ENCODE measurements at regions of chr3 and their contacts with region 1.

Region 1: DNA sequence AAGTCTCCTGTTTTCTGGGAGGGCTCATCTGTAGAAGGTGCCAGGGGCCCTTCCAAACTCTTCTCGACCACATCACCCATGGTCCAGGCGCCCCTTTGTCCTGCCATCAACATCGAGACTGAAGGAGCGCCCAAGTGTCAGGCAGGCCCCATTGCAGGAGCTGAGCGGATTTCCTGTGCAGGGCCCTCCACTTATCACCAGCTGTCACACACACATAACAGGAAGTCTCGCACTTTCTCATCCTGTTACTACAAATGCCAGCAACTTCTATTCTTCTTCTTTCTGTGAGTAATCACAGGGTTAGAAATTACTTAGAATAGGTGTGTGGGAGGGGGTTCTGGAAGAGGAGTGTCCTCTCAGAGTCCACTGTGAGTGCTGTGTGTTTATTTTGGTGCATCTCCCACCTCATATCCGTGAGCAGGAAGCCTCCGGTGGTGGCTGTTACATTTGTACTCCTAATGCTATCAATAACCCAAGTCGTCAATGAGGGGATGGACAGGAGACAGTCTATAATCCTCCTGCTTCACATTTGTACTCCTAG is at the start of gene KLHL6:
- DNase-seq: peak; percentile 93 to 98 (median 95)
- H3K4me3 ChIP-seq: peak within 1 kb of the TSS; percentile 33 to 88 (median 82)
- H3K27ac ChIP-seq: peak within 1 kb of the TSS; percentile 87 to 91
- H3K4me1 ChIP-seq: peaks cover 17 to 71% (median 39%) of the 10 kb centered on the region in 4 experiments
- H3K27me3 ChIP-seq: no peaks in the 10 kb centered on the region

Region 2: DNA sequence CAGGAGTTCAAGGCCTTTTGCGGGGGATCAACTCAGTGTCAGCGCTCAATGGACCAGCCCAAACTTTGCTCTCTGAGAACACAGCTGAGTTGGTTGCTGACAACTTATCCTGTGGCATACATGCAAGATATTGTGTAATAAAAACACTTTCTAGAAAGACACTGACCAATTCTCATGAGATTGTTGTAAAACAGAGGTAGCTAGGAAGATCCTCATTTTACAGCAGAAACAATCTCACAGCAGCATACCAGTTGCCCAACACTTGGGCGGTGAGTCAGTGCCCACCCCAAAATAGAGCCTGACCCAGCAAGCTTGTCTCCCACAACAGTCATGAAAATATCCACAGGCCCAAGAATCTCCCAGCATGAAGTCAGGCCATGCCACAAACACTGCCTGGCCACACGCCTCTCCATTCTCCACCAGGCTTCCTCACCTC is 18.3 kb before region 1 on chr3:
- CTCF ChIA-PET with region 1: interaction called, 25 read pairs
- POLR2A ChIA-PET with region 1: no interaction called
- DNase-seq: peak in 2 of 3 donors; percentile 77 to 79
- H3K4me3 ChIP-seq: peak overlapping the region in 1 of 7 experiments; percentile 16
- H3K27ac ChIP-seq: peak overlapping the region in 1 of 2 experiments; percentile 36
- H3K4me1 ChIP-seq: peaks cover 13 to 63% (median 52%) of the 10 kb centered on the region in 4 experiments
- H3K27me3 ChIP-seq: no peaks in the 10 kb centered on the region

Region 3: DNA sequence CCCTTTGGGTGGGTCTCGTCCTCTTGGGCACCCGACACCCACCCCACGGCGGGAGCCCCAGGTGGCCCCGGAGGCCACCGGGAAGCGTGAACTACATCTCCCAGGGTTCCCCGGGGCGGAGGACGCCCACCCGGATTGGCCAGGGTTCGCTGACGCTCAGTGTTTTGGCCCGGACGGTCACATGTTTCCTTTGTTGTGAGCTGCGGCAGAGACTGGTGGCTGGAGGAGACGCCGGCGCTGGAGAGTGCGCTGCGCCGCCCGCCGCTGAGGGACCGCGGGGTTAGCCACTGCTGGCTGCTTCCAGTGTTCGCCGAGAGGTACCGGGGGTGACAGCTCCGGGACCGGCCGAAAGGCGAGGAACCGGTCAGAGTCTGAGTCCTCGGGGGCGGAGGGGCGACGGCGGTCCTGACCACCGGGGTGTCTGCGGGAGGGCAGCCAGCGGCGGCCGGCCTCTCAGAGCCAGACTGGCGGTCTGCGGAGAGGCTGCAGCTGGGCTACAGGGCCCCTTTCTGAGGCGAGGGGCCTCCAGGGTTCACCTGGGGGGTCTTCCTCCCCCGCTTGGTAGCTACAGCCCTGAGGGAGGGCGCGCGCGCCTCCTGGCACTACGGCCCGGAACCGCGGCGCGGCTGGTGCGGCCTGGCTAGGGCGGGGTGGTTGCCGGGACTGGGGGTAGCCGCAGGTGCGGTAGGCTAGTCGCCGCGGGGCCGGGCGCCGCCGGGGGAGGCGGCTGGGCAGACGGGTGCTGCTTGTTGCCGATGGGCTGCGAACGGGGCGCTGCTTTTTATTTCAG is 80.0 kb after region 1 on chr3 and contains the start of gene KLHL24:
- CTCF ChIA-PET with region 1: interaction called, 4 read pairs
- POLR2A ChIA-PET with region 1: interaction called, 10 read pairs
- DNase-seq: peak; percentile 90 to 94 (median 91)
- H3K4me3 ChIP-seq: peak within 1 kb of the TSS; percentile 76 to 96 (median 92)
- H3K27ac ChIP-seq: peak within 1 kb of the TSS; percentile 88 to 93
- H3K4me1 ChIP-seq: peaks cover 15 to 23% (median 20%) of the 10 kb centered on the region in 4 experiments
- H3K27me3 ChIP-seq: no peaks in the 10 kb centered on the region

Measured in common myeloid progenitor, CD34-positive (primary cell).